ENCODE measurements at regions of chr6 and their contacts with region 1.

Region 1: DNA sequence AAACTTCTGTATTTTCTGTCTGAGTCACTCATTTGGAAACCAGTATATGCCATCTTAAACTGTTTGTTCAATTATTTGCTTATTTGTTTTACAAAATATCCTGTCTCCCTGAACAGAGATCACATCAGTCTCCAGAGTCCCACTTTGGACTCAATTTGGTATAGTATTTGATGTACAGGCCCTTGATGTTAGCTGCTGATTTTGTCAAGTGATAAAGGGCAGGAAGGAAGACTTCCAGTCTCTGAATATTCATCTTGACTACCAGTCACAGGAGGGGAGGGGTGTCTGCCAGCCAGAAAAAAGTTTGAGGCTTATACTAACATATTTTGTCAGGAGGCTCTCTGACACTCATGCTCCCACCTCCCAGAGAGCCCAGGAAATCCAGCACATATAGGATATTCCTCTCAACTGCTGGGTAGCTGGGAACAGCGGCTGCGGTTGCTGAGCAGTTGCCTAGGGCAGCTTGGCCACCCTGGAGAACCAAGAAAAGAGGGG is 376.8 kb upstream of the RUNX2 start:
- DNase-seq: no peak

Region 2: DNA sequence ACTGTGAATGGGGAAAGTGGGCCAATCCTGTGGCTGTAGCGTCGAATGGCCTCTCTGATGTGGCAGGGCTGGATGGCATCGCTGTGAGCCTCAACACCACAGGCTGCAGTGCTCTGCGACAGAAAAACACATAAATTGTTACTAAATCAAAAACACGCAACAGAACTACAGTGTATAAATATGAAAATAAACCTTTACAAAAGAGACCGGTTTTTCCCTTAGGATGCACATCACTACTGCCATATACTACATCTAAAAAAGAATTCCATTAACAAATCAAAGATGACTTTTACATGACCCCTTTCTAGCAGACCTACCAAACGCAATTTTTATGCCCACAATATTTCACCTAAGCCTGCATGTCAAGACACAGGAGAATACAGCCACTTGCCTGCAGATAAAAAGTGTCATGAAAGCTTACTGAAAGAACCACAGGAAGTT is 18.6 kb before region 1 on chr6:
- intact Hi-C with region 1: no loop called
- DNase-seq: no peak

Region 3: GRCh38 chr6:45031601-45032000 is 80.3 kb after region 1 on chr6:
- intact Hi-C with region 1: no loop called
- DNase-seq: no peak

Region 4: DNA sequence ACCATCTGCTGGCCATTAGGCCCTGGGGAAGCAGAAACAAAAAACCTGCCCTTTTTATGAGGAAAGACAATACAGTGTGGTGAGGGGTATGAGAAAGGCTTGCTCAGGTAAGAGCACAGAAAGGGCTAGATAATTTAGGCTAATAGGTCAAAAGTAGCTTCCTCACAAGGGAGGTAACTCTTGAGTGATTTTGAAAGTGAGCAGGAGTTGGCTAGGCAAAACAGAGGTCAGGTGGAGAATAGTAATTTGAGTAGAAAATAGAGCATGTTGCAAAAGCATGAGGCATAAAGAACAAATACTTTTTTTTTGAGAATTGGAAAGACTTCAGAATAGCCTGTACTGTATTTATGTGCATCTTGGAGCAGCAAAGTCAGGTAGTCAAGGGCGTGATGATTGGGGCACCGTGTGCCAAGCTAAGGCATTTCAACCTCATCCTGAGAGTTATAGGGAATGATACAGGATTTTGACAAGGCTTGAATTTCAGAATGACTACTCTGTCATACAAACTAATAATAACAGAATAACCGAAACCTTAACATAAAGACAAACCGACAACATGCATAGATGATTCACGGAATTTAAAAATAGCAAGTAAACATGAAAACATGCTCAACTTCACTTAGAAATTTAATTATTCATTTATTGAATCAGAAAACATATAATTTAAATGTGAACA is 1342.5 kb after region 1 on chr6:
- intact Hi-C with region 1: loop called in 1 of 2 experiments (anchors 5 kb)
- DNase-seq: no peak